H1 (cell line): ENCODE measurements at regions of chr1 and their contacts with region 1.

Region 1: DNA sequence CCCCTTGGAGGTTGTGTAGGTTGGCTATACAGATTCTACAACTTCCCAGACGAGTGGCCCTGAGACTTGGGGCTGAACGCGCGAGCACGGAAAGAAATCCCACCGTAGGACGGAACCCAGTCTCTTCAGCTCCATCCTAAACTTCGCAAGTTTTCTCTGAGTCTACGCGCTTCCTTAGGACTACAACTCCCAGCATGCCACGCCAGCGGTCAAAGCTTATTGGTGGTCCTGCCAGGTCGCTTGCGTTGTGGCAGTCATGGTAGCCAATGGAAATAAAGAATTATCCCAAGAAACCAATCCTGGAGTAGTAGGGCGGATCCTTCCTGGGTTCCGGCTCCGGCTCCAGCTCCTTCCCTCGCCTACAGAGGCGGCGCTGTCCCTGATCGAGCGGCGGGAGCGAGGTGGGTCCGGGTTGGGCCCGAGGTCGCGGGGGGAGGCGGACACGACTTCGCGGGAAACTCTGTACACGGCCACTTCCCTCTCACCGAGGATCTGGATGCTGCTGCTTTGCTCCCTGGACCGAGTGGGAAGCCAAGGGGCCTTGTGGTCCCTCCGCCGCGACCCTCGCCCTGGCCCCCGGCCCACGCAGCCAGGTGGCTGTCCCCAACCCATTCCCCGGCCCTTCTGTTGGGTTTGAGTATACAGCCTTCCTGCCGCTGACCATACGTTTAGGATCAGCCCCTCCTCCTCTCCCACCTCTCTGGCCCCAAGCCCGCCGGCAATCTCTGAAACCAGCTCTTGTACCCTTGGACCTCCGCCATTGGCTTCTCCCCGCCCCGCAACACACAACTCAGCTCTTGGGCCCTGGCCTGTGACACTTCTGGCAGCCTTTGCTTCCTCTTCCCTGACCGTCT is at the start of gene ZNF691:
- DNase-seq: peak; percentile 84 to 86
- H3K4me3 ChIP-seq: peak within 1 kb of the TSS; percentile 79 to 82 (median 81)
- H3K27ac ChIP-seq: peak within 1 kb of the TSS; percentile 60; the same call in 1 of the 2 replicates
- H3K4me1 ChIP-seq: peaks cover 2 to 9% (median 5%) of the 10 kb centered on the region in 4 experiments; a peak in 6 of 7 replicates
- H3K27me3 ChIP-seq: no peaks in the 10 kb centered on the region
- CTCF ChIP-seq: peak; percentile 17 to 39 (median 39); a peak in 3 of 4 replicates
- EP300 ChIP-seq: no peak
- POLR2A ChIP-seq: peak; percentile 60 to 61
- RAD21 ChIP-seq: no peak
- total RNA-seq, gene ZNF691: 18.6 and 19.5 TPM in 2 replicates

Region 2: GRCh38 chr1:42816585-42817434 is 29.7 kb before region 1 on chr1 and contains the starts of genes ERMAP and SVBP:
- CTCF ChIA-PET with region 1: interaction called, 5 read pairs
- POLR2A ChIA-PET with region 1: interaction called, 21 read pairs
- DNase-seq: peak; percentile 44 to 98
- H3K4me3 ChIP-seq: peak within 1 kb of the TSS; percentile 62 to 81 (median 69)
- H3K27ac ChIP-seq: peak within 1 kb of the TSS; percentile 98; the same call in 1 of the 2 replicates
- H3K4me1 ChIP-seq: peaks cover 3 to 10% (median 5%) of the 10 kb centered on the region in 4 experiments; a peak in 6 of 7 replicates
- H3K27me3 ChIP-seq: no peaks in the 10 kb centered on the region
- CTCF ChIP-seq: no peak
- EP300 ChIP-seq: no peak
- POLR2A ChIP-seq: peak; percentile 52 to 75
- RAD21 ChIP-seq: no peak
- total RNA-seq, gene ERMAP: 3.9 and 5.0 TPM in 2 replicates
- total RNA-seq, gene SVBP: 30.2 and 34.2 TPM in 2 replicates

Region 3: GRCh38 chr1:42822800-42823392 is 23.6 kb before region 1 on chr1:
- CTCF ChIA-PET with region 1: interaction called, 4 read pairs
- POLR2A ChIA-PET with region 1: interaction called, 21 read pairs
- DNase-seq: no peak
- H3K4me3 ChIP-seq: no peak overlapping the region
- H3K27ac ChIP-seq: no peak overlapping the region
- H3K4me1 ChIP-seq: peaks cover 0 to 5% (median 1%) of the 10 kb centered on the region in 4 experiments; a peak in 1 of 7 replicates
- H3K27me3 ChIP-seq: no peaks in the 10 kb centered on the region
- CTCF ChIP-seq: no peak
- EP300 ChIP-seq: no peak
- POLR2A ChIP-seq: no peak
- RAD21 ChIP-seq: no peak

Region 4: DNA sequence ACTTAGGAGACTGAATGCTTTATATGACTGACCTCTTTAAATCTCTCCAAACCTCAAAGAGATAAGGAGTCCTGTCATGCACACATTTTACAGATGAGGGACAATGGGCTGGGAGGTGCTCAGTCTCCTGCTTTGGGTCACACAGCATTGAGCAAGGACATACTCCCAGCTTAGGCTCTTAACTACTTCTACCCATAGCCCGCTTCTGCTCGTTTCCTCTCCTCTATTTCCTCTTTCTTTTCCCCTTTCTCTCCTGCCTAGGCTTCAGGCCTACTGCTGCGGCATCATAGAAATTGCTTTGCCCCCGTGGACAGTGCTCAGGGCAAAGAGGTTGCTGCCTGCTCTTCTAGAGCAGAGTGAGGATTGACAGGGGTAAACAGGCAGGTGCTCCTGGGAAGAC is 12.5 kb before region 1 on chr1:
- CTCF ChIA-PET with region 1: interaction called, 30 read pairs
- POLR2A ChIA-PET with region 1: interaction called, 16 read pairs
- DNase-seq: peak in 1 of 2 experiments; percentile 23
- H3K4me3 ChIP-seq: no peak overlapping the region
- H3K27ac ChIP-seq: no peak overlapping the region
- H3K4me1 ChIP-seq: no peaks in the 10 kb centered on the region
- H3K27me3 ChIP-seq: no peaks in the 10 kb centered on the region
- CTCF ChIP-seq: no peak
- EP300 ChIP-seq: no peak
- POLR2A ChIP-seq: no peak
- RAD21 ChIP-seq: no peak

Region 5: DNA sequence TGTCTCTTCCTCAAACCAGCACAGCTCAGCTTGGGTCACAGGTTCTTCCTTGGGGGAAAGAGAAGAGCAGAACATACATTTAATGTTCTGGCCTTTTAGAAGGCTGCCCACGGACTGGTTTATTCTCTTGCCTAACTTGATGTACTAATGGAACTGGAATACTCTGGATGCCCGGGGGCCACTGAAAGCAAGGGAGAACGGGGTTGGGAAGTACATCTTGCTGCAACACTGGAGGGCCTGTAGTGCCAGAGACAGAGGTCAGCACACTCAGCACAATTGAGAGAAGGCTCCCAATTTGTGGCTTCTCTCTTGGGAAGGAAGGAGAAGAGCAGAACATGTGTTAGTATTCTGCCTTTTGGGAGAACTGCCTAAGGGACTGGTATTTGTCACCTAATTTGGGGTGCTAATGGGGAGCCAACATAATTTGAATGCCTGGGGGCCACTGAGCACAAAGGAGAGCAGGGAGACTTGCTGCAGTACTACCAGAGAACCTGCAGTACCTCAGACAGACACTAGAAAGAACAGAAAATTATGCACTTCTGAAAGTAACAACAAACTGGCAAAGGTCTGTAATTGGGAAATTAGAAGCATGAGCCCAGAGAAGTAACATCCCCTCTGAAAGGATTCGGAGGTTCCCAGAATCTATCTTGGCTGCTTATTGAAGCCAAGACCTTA is 14.0 kb after region 1 on chr1:
- CTCF ChIA-PET with region 1: interaction called, 4 read pairs
- POLR2A ChIA-PET with region 1: interaction called, 13 read pairs
- DNase-seq: no peak
- H3K4me3 ChIP-seq: no peak overlapping the region
- H3K27ac ChIP-seq: no peak overlapping the region
- H3K4me1 ChIP-seq: no peaks in the 10 kb centered on the region
- H3K27me3 ChIP-seq: no peaks in the 10 kb centered on the region
- CTCF ChIP-seq: peak in 1 of 3 experiments; percentile 13; a peak in 2 of 4 replicates
- EP300 ChIP-seq: no peak
- POLR2A ChIP-seq: no peak
- RAD21 ChIP-seq: no peak